Breast epithelium (tissue), 4 donors: ENCODE measurements at regions of chr20 and their contacts with region 1.

Region 1: DNA sequence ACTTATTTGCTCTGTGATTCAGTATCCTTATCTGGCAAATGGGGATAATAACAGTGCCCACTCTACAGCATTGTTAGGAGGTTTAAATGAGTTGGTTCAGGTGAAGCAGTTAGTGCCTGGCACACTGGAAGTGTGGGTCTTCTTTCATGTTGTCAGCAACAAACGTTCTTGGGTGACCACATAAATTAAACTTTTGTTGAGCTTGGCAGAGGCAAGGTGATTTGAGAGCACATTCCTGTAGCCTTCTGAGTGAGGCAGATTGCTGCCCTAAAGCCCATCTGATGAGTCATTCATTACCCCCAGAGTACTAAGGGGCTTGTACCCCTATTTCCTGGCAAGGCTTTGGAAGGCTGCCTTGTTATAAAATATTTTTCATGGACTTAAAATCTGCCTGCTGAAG is 25.8 kb downstream of the SEC23B start:
- DNase-seq: no peak
- H3K4me3 ChIP-seq: no peak overlapping the region
- H3K27ac ChIP-seq: no peak overlapping the region
- H3K4me1 ChIP-seq: no peaks in the 10 kb centered on the region
- H3K27me3 ChIP-seq: no peaks in the 10 kb centered on the region
- CTCF ChIP-seq: no peak
- POLR2A ChIP-seq: no peak

Region 2: DNA sequence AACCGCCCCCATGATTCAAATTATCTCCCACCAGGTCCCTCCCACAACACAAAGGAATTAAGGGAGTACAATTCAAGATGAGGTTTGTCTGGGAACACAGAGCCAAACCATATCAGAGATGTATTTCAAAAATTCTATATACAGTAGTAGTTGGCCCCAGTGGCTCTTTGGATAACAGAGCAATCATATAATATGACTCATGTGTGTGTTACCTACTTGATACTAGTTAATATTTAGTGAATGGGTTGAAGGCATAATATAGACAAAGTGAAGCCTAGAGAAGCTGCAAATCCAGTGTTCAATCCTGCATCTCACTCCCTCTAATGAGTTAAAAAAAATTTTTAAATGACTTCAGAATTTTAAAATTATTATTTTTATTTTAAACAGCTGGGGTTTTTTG is 352.7 kb before region 1 on chr20:
- intact Hi-C with region 1: loop called (anchors 5 kb)
- DNase-seq: no peak
- H3K4me3 ChIP-seq: no peak overlapping the region
- H3K27ac ChIP-seq: no peak overlapping the region
- H3K4me1 ChIP-seq: no peaks in the 10 kb centered on the region
- H3K27me3 ChIP-seq: no peaks in the 10 kb centered on the region
- CTCF ChIP-seq: no peak
- POLR2A ChIP-seq: no peak